ENCODE measurements at regions of chr22 and their contacts with region 1.

Region 1: DNA sequence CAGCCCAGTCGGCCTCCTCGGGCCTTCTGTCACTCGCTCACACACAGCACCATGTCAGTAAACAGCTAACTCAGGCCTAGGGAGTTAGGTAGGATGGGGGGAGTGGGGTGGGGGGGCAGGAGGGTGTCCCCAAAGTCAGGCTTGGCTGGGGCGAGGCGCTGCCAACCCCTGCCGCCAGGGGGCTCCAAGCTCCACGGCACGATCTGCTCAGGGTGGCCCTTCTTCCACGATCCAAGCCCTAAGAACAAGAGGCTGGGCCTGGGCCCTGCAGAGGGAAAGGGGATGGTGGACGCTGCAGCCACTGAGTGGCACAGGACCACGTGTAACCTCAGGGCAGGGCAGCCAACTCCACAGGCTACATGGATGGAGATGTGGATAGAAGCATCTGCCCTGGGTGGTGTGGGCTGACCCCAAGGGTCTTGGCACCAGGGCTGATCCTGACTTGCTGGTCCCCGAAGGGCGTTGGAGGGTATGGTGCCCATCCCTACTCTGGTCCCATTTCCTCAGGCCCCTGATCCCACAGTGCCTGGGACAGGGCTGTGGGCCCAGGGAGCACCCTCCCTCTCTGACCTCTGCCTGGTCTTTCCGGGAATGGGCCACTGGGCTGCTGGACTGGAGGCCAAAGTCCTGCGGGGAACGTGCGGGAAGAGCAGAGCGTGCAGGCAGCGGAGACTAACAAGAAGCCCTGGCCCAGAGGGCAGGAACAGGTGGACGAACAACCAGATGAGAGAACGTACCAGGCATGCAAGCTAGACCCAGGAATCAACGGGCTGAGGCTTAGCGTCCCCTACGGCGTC is 29.1 kb upstream of the TXNRD2 start:
- DNase-seq: peak; percentile 56
- H3K4me3 ChIP-seq: no peak overlapping the region
- H3K27ac ChIP-seq: no peak overlapping the region
- H3K4me1 ChIP-seq: peaks cover 26% of the 10 kb centered on the region
- H3K27me3 ChIP-seq: no peaks in the 10 kb centered on the region
- CTCF ChIP-seq: peak; percentile 69 to 96
- POLR2A ChIP-seq: no peak

Region 2: GRCh38 chr22:19986410-19987341 is 16.0 kb after region 1 on chr22:
- CTCF ChIA-PET with region 1: interaction called, 11 read pairs
- POLR2A ChIA-PET with region 1: interaction called, 7 read pairs
- dilution Hi-C with region 1: no loop called
- intact Hi-C with region 1: loop called (anchors 1 kb)
- DNase-seq: peak; percentile 77
- H3K4me3 ChIP-seq: peak overlapping the region; percentile 67 to 87 (median 78)
- H3K27ac ChIP-seq: peak overlapping the region; percentile 80
- H3K4me1 ChIP-seq: peaks cover 26% of the 10 kb centered on the region
- H3K27me3 ChIP-seq: no peaks in the 10 kb centered on the region
- CTCF ChIP-seq: peak in 1 of 2 donors; percentile 5
- POLR2A ChIP-seq: peak; percentile 76

Region 3: DNA sequence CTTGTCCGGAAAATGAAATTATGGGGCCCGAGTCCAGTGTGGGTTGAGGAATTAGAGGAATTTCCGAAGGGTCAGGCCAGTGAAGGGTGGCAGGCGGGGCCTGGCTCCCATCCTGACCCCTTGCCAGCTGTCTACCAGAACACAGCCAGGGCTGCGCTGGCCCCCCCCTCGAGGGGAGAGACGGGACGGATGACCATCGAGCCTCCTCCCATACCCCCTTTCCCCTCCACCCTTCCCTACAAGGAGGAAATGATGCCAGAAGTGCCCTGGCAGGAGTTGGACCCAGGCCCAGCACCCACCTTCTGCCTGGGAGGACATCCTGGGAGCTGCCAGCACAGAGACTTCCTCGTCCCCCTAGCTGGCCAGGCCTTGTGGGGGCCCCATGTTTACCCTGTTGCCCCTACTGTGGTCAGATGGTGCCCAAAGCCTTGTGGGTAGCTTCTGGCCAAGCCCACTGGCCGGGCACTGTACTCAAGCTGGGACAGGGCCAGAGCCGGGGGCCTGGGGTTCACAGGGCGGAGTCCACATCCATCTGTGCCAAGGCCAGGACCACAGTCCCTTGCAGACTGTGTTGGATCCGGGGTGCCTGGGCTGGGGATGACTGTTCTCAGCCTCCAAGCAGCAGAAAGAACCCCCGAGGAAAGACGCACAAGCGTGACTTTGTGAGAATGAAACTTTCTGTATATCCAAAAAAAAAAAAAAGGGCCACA is 25.1 kb after region 1 on chr22:
- CTCF ChIA-PET with region 1: interaction called, 3 read pairs
- POLR2A ChIA-PET with region 1: no interaction called
- dilution Hi-C with region 1: no loop called
- intact Hi-C with region 1: loop called (anchors 1 kb)
- DNase-seq: peak; percentile 28
- H3K4me3 ChIP-seq: no peak overlapping the region
- H3K27ac ChIP-seq: no peak overlapping the region
- H3K4me1 ChIP-seq: peaks cover 23% of the 10 kb centered on the region
- H3K27me3 ChIP-seq: no peaks in the 10 kb centered on the region
- CTCF ChIP-seq: no peak
- POLR2A ChIP-seq: no peak

Region 4: DNA sequence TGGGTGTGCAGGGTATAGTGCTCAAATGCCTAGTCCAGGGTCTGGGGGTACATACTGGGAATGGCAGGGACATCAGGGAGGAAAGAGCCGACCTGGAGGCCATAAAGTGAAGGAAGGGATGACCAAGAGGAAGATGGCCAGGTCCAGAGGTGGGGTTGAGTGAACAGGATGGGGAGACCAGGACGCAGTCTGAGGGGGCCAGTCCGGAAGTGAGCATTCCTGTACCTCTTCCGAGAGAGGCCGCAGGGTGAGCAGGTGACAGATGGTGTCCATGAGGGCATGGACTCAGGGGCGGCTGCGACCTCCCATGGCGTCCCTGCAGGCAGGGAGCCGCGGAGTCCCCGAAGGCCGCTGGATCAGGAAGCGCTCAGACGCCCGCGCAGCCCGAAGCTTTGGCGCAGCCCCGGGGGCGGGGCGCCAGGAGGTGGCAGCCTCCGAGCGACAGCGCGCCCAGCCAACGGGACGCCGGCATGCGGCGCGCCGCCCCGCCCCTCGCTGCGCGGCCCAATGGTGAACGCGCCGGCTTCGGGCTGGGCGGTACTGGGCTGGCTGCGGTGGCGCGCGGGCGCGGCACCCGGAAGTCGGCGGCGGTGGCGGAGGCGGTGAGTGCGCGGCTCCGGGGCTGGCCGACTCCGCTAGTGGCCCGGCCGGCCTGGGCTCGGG is 50.0 kb after region 1 on chr22 and contains the start of gene TANGO2:
- CTCF ChIA-PET with region 1: interaction called, 304 read pairs
- POLR2A ChIA-PET with region 1: no interaction called
- dilution Hi-C with region 1: no loop called
- intact Hi-C with region 1: no loop called
- DNase-seq: peak; percentile 88
- H3K4me3 ChIP-seq: peak within 1 kb of the TSS; percentile 69 to 82 (median 81)
- H3K27ac ChIP-seq: peak within 1 kb of the TSS; percentile 74
- H3K4me1 ChIP-seq: peaks cover 17% of the 10 kb centered on the region
- H3K27me3 ChIP-seq: no peaks in the 10 kb centered on the region
- CTCF ChIP-seq: no peak
- POLR2A ChIP-seq: peak; percentile 84
- total RNA-seq, gene TANGO2: 33.2 and 40.0 TPM in 2 replicates

Region 5: DNA sequence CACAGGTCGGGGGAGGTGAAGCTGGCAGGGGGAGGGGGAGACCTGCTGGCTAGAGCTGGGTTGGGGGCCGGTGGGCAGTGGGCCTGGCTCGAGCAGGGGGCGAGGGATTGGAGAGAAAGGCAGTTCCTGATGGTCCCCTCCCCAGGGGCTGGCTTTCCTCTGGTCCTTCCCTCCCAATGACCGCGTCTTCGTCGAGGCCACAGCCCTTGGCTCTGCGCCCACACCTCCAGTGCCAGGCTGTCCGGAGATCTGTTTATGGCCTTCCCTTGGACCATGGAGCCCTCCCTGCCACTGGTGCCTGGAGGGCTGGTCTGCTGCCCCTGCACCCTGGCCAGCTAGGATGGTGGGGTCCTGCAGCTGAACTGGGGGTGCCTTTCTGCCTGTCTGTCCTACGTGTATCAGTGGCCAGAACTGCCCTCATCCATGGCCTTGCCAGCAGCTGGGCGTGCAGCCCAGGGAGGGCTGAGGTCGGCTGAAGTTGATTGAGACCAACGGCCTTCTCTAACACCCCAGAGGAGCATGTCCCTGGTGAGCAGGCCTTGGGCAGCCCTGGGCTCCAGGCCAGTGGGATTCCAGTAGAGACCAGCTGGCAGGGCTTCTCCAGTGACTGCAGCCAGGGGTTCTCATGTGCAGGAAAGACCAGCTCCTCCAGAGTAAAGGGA is 62.5 kb after region 1 on chr22:
- CTCF ChIA-PET with region 1: no interaction called
- POLR2A ChIA-PET with region 1: no interaction called
- dilution Hi-C with region 1: no loop called
- intact Hi-C with region 1: no loop called
- DNase-seq: no peak
- H3K4me3 ChIP-seq: no peak overlapping the region
- H3K27ac ChIP-seq: no peak overlapping the region
- H3K4me1 ChIP-seq: no peaks in the 10 kb centered on the region
- H3K27me3 ChIP-seq: no peaks in the 10 kb centered on the region
- CTCF ChIP-seq: no peak
- POLR2A ChIP-seq: no peak

Measured in endothelial cell of umbilical vein (primary cell).